ENCODE measurements at regions of chr2 and their contacts with region 1.

Region 1: DNA sequence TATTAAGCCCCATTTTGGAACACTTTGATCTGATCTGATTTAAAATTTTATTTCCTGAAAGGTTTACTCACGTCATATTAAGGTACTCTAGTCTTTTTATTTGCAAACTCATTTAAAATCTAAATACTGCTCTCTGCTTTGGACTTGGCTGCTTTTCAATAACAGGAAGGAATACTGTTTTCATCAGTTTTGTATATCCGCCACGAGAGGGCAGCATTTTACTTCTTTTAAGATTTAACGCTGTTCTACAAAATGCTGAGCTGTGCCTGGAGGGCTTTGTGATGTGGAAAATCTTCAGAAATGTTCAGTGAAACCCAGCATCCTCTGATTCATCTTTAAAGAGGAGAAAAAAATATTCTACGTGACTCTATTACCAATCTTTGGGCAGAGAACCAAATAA is 37.5 kb upstream of the SLC38A11 start:
- DNase-seq: peak; percentile 30
- H3K4me3 Mint-ChIP-seq: no peak overlapping the region
- H3K27ac Mint-ChIP-seq: no peak overlapping the region
- H3K4me1 Mint-ChIP-seq: peaks cover 12% of the 10 kb centered on the region
- H3K27me3 Mint-ChIP-seq: no peaks in the 10 kb centered on the region

Region 2: DNA sequence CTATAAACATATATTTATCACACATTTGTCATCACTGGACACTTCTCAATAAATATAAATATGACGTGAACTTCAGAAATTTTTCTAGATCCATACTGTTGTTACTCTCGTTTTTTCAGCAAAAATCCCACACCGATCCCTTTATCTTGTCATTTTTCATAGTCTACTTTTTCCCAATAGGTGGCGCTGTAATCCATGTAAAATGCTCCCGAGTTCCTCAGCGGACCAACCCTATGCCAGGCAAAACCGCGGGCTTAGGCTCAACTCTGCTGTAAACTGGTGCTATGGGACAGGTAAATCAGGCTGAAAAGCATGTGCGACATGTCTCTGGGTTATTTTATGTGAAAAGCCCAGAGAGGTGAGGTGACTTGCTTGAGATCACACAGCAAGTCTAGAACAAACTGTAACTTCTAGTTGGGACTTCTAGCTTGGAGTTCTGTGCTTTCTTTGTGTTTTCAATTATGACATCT is 255.2 kb before region 1 on chr2:
- CTCF ChIA-PET with region 1: no interaction called
- POLR2A ChIA-PET with region 1: no interaction called
- intact Hi-C with region 1: loop called (anchors 2 kb)
- DNase-seq: peak; percentile 12
- H3K4me3 Mint-ChIP-seq: no peak overlapping the region
- H3K27ac Mint-ChIP-seq: no peak overlapping the region
- H3K4me1 Mint-ChIP-seq: no peaks in the 10 kb centered on the region
- H3K27me3 Mint-ChIP-seq: no peaks in the 10 kb centered on the region

Region 3: DNA sequence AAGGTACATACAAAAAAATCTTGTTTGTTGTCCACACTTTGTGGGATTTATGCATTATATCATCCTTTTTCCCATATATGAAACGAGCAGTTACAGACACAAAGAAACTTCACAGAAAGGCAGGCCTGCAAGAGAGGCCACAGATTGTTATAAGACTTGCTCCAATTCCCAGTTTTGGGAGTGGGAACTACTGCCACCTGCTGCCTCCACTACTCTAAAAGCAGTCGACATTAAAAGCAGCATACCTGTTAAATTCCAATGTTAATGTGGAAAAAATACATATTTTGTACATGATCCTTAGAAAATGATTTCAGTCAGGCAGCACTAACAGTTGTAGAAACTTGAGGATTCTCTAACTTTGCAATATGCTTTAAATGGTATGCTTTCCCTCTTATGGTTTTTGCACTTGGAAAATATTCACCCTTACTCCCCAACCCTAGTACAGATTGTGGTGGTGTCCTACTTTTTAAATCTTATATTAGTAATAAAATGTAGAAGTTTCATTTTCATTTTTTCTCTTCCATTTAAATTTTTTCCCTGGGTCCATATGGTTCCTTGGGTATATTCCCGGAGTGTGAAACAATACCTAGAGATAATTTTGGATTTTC is 75.4 kb before region 1 on chr2:
- CTCF ChIA-PET with region 1: no interaction called
- POLR2A ChIA-PET with region 1: no interaction called
- intact Hi-C with region 1: no loop called
- DNase-seq: no peak
- H3K4me3 Mint-ChIP-seq: no peak overlapping the region
- H3K27ac Mint-ChIP-seq: no peak overlapping the region
- H3K4me1 Mint-ChIP-seq: no peaks in the 10 kb centered on the region
- H3K27me3 Mint-ChIP-seq: peaks cover 1% of the 10 kb centered on the region

Region 4: DNA sequence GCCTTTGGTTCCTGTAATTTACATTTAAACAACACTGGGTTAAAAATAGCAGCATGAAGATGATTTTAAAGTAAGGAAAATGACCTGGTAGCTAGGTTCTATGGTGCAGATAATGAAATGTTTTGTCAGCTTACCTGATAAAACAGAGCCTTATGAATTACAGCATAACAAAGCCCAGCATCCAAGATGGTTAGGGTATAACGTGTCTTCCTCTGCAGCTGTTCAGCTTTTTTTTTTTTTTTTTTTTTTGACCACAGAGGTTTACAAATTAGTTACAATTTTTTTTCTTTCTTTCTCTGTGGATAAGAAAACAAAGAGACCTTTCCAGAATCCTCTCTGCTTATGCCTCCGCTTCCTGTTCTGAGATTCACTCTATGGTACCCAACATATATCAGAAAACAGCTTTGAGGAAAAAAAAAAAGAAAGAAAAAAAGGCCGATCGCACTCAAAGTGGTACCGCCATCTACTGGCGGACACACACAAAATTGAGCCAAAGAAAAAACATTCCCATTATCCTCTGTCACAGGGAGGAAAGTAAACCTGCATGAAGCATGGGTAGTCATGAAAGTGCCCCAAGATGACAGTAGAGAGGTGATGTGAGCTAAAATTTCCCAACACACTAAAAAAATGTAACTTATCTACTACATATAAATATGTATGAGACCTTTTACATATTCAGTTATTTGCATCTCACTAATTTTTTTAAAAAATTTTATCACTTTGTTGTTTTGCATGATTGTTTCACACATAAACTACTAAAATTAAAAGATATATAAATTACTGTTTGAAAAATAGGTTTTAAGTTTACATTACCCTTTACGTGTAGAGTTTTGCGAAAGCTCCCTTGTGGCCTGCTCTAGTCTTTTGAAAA is 211.1 kb after region 1 on chr2 and contains the start of gene SCN3A:
- CTCF ChIA-PET with region 1: interaction called, 11 read pairs
- POLR2A ChIA-PET with region 1: no interaction called
- intact Hi-C with region 1: loop called (anchors 2 kb)
- DNase-seq: no peak
- H3K4me3 Mint-ChIP-seq: no peak within 1 kb of the TSS
- H3K27ac Mint-ChIP-seq: no peak within 1 kb of the TSS
- H3K4me1 Mint-ChIP-seq: no peaks in the 10 kb centered on the region
- H3K27me3 Mint-ChIP-seq: peaks cover 2% of the 10 kb centered on the region
- total RNA-seq, gene SCN3A: not detected

Region 5: DNA sequence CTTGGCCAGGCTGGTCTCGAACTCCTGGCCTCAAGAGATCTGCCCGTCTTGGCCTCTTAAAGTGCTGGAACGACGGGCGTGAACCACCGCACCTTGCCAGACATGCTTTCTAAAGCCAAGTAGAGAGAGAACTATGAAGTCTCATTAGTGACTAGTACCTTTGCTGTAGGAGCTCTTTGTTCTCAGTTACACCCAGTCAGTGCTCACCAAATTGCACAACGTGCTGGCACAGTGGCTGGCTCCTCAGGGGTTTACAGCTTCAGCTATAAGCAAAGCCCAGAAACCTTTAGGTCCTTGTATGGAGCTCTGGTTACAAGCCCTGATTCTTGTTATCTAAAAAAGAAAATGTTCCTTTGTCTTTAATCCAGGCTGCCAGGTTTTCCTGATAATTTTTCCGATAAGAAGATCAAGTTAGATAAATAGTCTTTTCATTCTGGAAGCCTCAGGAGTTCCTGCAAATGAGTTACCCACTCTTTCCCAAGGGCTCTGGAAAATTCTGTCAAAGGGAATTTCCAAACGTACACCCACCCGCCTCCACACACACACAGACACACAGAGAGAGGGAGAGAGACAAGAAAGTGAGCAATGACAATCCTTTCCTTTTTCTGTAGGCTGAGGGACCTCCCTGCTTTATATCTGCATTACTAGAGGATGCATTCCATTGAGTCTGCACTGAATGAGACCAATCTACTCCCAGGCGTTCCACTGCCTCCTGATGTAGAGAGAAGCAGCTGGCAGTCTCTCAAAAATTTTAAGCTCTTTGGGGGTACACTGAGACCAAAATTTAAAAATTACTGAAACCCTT is 376.5 kb after region 1 on chr2:
- CTCF ChIA-PET with region 1: no interaction called
- POLR2A ChIA-PET with region 1: no interaction called
- intact Hi-C with region 1: no loop called
- DNase-seq: no peak
- H3K4me3 Mint-ChIP-seq: no peak overlapping the region
- H3K27ac Mint-ChIP-seq: no peak overlapping the region
- H3K4me1 Mint-ChIP-seq: no peaks in the 10 kb centered on the region
- H3K27me3 Mint-ChIP-seq: no peaks in the 10 kb centered on the region

Region 6: DNA sequence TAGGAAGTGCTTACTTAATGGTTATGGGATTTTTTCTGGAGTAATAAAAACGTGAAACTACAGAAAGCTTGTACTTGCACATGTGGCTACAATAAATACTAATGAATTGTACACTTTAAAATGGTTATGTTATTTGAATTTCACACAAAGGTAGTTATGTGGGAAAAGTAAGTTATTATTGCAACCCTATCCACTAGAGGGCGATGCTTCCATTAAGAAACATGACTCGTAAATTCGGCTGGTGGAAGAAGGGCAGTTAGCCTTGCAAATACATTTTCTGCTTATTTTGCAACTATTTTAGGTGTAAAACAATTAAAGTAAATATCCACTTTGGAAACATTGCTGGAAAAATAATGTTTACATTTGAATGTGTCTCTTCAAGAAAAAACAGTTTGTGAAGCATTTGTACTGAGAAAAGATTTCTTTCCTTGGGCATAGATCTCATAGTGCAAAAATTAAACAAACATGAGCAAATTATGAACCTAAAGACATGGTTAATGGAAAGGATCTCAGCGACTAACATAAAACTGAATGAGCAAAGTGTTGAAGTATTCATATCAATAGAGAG is 408.6 kb after region 1 on chr2:
- CTCF ChIA-PET with region 1: no interaction called
- POLR2A ChIA-PET with region 1: no interaction called
- intact Hi-C with region 1: loop called (anchors 10 kb)
- DNase-seq: no peak
- H3K4me3 Mint-ChIP-seq: no peak overlapping the region
- H3K27ac Mint-ChIP-seq: no peak overlapping the region
- H3K4me1 Mint-ChIP-seq: no peaks in the 10 kb centered on the region
- H3K27me3 Mint-ChIP-seq: peaks cover 8% of the 10 kb centered on the region

Region 7: GRCh38 chr2:166127217-166128155 is 1134.7 kb after region 1 on chr2 and contains the start of gene SCN1A:
- CTCF ChIA-PET with region 1: interaction called, 4 read pairs
- POLR2A ChIA-PET with region 1: no interaction called
- intact Hi-C with region 1: loop called (anchors 2 kb)
- DNase-seq: no peak
- H3K4me3 Mint-ChIP-seq: no peak within 1 kb of the TSS
- H3K27ac Mint-ChIP-seq: no peak within 1 kb of the TSS
- H3K4me1 Mint-ChIP-seq: peaks cover 4% of the 10 kb centered on the region
- H3K27me3 Mint-ChIP-seq: peaks cover 10% of the 10 kb centered on the region
- total RNA-seq, gene SCN1A: not detected

Measured in activated CD4-positive, alpha-beta memory T cell treated with anti-CD3 and anti-CD28 coated beads for 36 hours (primary cell).